RWPE1 (cell line): ENCODE measurements at regions of chr17 and their contacts with region 1.

Region 1: GRCh38 chr17:81959362-81960129 is 1.4 kb downstream of the NOTUM start:
- DNase-seq: peak; percentile 41
- H3K27ac ChIP-seq: no peak overlapping the region
- CTCF ChIP-seq: peak; percentile 99

Region 2: GRCh38 chr17:81878294-81878693 is 81.3 kb before region 1 on chr17:
- CTCF ChIA-PET with region 1: no interaction called
- POLR2A ChIA-PET with region 1: no interaction called
- DNase-seq: no peak
- H3K27ac ChIP-seq: no peak overlapping the region
- CTCF ChIP-seq: no peak

Region 3: DNA sequence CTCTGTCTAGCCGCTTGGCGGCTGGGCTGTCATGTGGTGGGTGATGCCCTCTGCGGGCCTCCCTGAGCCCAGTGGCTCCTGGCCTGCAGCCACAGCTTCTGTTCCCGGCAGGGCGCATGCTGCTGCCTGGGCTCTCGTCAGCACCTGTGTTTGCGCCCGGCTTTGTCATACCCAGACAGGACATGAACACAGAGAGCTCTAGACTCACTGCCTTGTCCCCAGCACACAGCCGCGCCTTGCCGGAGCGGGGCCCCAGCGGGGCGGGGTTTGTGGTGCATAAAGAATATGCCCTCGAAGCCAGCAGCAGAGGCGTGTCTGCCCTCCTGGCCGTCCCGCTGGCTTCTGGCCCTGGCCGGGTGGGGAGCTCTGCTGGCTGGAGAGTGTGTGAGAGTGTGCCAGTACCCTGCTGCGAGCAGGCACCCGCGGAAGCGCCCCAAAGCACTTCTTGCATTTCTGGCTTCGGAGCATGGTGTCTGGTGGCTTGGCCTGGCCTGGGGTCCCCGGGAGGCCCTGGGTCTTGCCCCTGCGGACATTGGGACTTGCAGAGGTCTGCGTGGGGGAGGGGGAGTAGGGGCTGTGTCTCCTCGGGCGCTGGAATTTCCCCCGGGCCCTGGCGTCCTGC is 32.2 kb after region 1 on chr17:
- CTCF ChIA-PET with region 1: interaction called, 18 read pairs
- POLR2A ChIA-PET with region 1: no interaction called
- DNase-seq: peak; percentile 58
- H3K27ac ChIP-seq: peak overlapping the region; percentile 100
- CTCF ChIP-seq: no peak

Region 4: DNA sequence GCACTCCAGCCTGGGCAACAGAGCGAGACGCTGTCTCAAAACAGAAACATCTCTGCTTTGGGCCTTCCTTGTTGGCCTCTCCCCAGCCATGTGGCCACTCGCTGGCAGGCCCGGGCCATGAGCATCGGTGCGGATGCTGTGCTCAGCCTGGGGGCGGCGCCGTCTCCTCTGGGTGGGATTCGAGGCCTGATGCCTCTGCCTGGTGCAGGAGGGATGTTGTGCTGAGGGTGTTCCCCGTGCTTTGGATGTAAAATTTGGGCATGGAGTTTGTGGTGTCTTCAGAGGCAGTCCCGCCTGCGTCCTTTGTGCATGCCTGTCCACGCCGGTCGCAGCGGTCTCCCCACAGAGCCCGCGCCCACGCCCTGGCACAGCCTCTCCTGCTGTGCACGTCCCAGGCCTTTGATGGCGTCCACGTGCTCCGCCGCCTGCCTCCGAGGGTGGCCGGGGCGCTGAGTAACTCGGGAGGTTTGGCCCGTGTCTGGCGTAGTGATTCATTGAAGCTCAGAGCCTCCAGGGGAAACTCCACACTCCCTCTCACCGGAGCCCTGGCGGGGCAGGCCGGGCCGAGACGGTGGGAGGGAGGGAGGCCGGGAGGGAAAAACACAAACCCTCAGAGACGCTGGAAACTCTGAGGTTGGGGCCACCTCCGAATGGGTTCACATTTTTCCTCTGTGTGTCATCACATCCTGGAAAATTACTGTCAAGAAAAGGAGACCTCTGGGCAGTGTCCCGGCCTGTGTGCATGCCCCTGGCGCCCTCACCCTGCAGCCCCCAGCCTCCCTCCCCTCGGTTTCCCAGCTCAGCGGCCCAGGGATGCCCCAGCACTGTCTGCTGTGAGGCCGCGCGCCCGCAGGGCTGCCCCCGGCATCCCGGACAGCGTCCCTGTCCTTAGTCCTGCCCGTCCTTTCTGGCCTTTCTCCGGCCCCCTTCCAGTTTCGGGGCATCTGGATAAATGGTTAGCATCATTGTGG is 44.1 kb after region 1 on chr17:
- CTCF ChIA-PET with region 1: interaction called, 16 read pairs
- POLR2A ChIA-PET with region 1: no interaction called
- DNase-seq: peak; percentile 94
- H3K27ac ChIP-seq: peak overlapping the region; percentile 95
- CTCF ChIP-seq: no peak

Region 5: DNA sequence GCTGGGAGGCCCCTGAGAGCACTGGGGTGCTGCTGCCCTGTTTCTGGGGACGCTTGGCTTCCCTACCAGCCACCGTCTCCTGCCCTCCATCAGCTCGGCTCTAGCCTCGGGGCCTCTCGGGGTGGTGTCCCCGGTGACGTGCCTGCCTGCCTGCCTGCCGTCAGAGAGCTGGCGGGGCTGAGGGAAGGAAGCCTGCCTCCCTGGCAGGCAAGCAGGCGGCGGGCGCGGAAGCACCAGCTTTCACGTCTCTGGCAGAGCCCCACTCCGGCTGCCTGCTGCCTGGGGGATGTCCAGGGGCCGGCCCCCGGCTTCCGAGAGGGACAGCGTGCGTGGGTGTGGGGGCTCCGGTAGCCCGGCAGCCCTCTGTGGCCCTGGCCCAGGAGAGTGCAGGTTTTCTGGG is 53.8 kb after region 1 on chr17:
- CTCF ChIA-PET with region 1: interaction called, 35 read pairs
- POLR2A ChIA-PET with region 1: no interaction called
- DNase-seq: no peak
- H3K27ac ChIP-seq: peak overlapping the region; percentile 60
- CTCF ChIP-seq: no peak

Region 6: GRCh38 chr17:82022981-82023374 is 63.4 kb after region 1 on chr17 and contains the start of gene LRRC45:
- CTCF ChIA-PET with region 1: interaction called, 128 read pairs
- POLR2A ChIA-PET with region 1: interaction called, 4 read pairs
- DNase-seq: peak; percentile 98
- H3K27ac ChIP-seq: peak within 1 kb of the TSS; percentile 80
- CTCF ChIP-seq: no peak

Region 7: DNA sequence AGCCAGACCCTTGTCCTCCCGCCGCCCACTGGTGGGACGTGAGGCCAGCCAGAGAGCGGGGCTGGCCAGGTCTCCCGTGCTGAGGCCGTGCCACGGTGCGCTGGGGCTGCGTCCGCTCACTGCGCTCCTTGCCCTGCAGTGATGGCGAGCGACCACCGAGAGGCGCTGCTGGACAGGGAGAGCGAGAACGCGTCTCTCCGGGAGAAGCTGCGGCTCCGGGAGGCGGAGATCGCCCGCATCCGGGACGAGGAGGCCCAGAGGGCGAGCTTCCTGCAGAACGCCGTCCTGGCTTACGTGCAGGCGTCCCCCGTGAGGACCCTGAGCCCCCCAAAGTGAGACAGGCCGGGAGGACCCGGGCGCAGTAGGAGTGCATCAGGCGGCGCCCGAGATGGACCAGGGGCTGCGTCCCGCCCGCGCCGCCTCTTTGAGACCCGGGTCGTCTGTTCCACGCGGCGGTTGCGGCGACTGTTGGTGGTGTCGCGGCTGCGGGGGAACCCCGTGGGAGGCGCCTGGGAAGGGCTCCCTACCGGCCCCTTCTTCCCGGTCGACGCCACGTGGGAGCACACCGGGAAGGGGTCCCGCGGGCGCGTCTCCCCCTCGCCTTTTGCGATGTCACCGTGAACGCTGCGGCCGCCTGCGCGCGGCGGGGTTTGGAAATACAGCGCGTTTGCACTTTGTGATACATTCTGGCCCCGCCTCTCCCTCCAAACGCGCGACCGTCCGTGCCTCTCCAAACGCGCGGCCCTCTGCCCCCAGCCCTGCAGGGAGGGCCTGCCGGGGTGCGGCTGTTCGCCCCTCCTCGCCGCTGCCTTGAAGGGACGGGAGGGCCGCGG is 71.1 kb after region 1 on chr17:
- CTCF ChIA-PET with region 1: interaction called, 24 read pairs
- POLR2A ChIA-PET with region 1: no interaction called
- DNase-seq: peak; percentile 74
- H3K27ac ChIP-seq: peak overlapping the region; percentile 82
- CTCF ChIP-seq: peak; percentile 92